Pancreas (tissue), 10 donors: ENCODE measurements at regions of chr19 and their contacts with region 1.

Region 1: GRCh38 chr19:3324321-3324856 is 42.0 kb upstream of the NFIC start:
- DNase-seq: peak in 4 of 6 donors; percentile 73 to 91 (median 82)
- ATAC-seq: peak; percentile 51 to 70 (median 60)
- H3K4me3 ChIP-seq: no peak overlapping the region
- H3K27ac ChIP-seq: no peak overlapping the region
- H3K4me1 ChIP-seq: peaks cover 0 to 3% (median 0%) of the 10 kb centered on the region in 3 donors
- H3K27me3 ChIP-seq: no peaks in the 10 kb centered on the region
- CTCF ChIP-seq: peak; percentile 52 to 71 (median 62)

Region 2: DNA sequence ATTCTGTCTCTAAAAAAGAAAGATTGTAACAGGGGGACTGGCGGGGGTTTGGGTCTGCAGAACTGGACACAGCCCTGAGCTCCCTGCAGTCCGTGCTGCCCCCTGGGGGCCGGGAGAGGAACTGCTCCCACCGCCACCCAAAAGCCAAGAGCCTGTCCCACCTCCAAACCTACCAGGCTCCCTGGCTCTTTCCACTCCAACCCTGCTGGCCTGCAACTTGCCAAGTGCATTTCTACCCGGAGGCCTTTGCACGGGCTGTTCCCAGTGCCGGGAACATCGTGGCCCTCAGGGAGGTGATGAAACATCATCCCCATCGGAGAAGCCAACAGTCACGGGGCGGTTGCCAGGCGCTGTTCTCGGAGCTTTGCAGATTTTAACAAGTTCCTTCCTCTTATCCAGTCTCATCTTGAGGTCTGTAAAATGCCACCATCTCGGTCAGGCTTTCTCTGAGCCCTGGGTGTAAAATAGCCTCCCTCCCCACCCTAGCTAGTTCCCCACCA is 105.2 kb after region 1 on chr19:
- intact Hi-C with region 1: loop called in 1 of 3 experiments (anchors 5 kb)
- DNase-seq: peak; percentile 69 to 91 (median 82)
- ATAC-seq: peak; percentile 58 to 82 (median 78)
- H3K4me3 ChIP-seq: no peak overlapping the region
- H3K27ac ChIP-seq: peak overlapping the region in 2 of 4 donors; percentile 52 to 57
- H3K4me1 ChIP-seq: peaks cover 0 to 4% (median 0%) of the 10 kb centered on the region in 3 donors
- H3K27me3 ChIP-seq: no peaks in the 10 kb centered on the region
- CTCF ChIP-seq: peak; percentile 94 to 98 (median 96)

Region 3: GRCh38 chr19:3471954-3472655 is 147.7 kb after region 1 on chr19:
- intact Hi-C with region 1: loop called (anchors 5 to 10 kb)
- DNase-seq: peak in 3 of 6 donors; percentile 56 to 81 (median 65)
- ATAC-seq: peak; percentile 37 to 68 (median 63)
- H3K4me3 ChIP-seq: no peak overlapping the region
- H3K27ac ChIP-seq: no peak overlapping the region
- H3K4me1 ChIP-seq: peaks cover 0 to 5% (median 0%) of the 10 kb centered on the region in 3 donors
- H3K27me3 ChIP-seq: no peaks in the 10 kb centered on the region
- CTCF ChIP-seq: peak; percentile 64 to 82 (median 76)

Region 4: DNA sequence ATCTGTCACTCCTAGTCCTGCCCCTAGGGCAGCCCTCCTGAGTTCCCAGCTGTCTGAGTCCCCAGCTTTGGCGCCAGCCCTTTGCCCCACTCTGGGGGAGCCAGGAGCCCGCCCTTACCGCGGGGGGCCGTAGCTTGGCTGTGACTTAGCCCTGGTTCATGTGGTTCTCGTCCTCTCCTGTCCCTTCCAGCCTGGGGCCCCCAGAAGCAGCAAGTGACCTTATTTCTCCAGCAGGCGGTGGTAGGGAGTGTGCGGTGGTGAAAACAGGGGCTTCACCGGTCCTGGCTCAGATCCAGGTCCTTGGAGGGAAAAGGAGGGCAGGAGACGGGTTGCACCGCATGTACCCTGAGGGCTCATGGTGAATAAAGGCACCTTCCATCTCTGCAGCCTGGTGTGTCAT is 268.8 kb after region 1 on chr19:
- intact Hi-C with region 1: no loop called
- DNase-seq: peak in 1 of 6 donors; percentile 12
- ATAC-seq: no peak
- H3K4me3 ChIP-seq: no peak overlapping the region
- H3K27ac ChIP-seq: no peak overlapping the region
- H3K4me1 ChIP-seq: no peaks in the 10 kb centered on the region
- H3K27me3 ChIP-seq: no peaks in the 10 kb centered on the region
- CTCF ChIP-seq: no peak

Region 5: DNA sequence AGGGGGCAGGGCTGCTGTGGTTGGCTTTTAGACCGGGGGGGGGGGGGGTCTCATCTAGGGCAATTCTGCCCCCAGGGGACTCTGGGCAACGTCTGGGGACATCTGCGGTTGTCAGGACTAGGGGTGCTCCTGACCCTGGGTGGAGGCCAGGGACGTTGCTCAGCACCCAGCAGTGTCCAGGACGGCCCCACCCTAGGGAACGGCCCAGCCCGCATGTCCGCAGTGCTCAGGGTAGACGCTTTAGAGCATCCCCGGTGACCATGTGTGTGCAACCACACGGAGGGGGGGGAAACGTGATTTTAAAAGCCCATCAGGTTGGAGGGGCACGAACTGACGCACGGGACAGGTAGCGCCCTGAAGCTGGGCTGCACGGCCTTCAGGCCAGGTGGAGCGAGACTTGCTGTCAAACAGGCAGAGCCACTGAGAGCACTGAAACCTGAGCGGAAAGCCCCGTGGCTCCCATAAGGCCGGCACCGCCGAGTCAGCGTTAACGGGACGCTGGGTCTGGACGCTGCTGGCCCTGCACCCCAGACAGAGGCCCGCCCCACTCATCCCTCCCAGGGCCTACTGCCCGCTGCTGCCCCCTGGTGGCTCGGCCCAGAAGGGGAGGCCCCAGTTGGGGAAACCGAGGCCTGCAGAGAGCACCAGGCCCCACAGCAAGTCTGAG is 293.9 kb after region 1 on chr19:
- intact Hi-C with region 1: loop called in 1 of 3 experiments (anchors 10 kb)
- DNase-seq: peak in 5 of 6 donors; percentile 37 to 84 (median 55)
- ATAC-seq: peak; percentile 30 to 90 (median 80)
- H3K4me3 ChIP-seq: no peak overlapping the region
- H3K27ac ChIP-seq: no peak overlapping the region
- H3K4me1 ChIP-seq: no peaks in the 10 kb centered on the region
- H3K27me3 ChIP-seq: no peaks in the 10 kb centered on the region
- CTCF ChIP-seq: peak; percentile 71 to 89 (median 82)